PC-9 (cell line): ENCODE measurements at regions of chr15 and their contacts with region 1.

Region 1: DNA sequence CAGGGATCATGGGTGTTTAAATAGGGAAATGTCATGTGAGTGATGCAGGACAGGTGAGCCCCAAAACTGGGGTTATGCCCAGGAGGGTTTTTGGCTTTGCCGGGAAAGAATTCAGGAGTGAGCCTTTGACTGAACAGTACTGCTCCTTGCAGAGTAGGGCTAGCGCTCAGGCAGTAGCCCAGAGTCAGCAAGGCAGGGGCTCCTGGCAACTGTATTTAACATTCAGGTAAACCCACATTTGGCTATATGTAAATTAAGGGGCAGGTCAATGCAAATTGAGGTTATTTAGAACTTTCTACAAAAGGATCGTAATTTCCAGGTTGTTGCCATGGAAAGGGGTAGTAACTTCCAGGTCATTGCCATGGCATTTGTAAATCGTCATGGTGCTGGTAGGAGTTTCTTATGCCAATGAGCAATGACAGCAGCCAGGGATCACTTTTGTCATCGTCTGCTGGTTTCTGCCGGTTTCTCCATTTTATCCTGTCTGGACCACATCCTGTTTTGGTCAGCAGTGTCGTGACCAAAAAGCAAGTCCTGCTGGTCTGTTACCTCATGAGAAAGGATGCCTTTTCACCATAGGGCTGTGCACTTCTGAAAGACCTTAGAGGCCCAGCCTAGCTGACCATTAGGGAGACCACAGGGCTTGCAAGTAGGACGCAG is 24.3 kb downstream of the MTHFS start:
- DNase-seq: no peak
- H3K4me3 ChIP-seq: no peak overlapping the region
- H3K27ac ChIP-seq: no peak overlapping the region
- H3K4me1 ChIP-seq: no peaks in the 10 kb centered on the region
- H3K27me3 ChIP-seq: no peaks in the 10 kb centered on the region
- CTCF ChIP-seq: no peak

Region 2: GRCh38 chr15:78455749-78456148 is 1416.7 kb before region 1 on chr15:
- CTCF ChIA-PET with region 1: no interaction called
- POLR2A ChIA-PET with region 1: interaction called, 10 read pairs
- intact Hi-C with region 1: no loop called
- DNase-seq: no peak
- H3K4me3 ChIP-seq: no peak overlapping the region
- H3K27ac ChIP-seq: no peak overlapping the region
- H3K4me1 ChIP-seq: peaks cover 9% of the 10 kb centered on the region
- H3K27me3 ChIP-seq: no peaks in the 10 kb centered on the region
- CTCF ChIP-seq: no peak

Region 3: DNA sequence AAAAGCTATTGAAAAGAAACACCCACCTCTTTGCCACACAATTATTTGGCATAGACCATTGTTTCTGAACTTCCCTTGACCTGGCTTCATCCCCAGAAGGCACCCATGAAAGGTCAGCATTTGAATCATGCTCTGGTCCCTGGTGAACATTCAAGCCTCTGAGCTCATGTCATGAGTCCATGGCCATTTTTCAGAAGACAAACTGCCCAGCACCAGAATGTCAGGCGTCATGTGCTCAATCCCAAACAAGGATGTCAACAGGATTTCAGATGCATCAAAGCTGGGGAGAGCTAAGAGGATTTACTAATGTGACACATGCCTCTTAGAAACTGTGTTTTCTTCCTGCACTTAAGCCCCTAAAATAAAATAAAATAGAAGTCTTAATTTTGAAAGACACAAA is 520.3 kb before region 1 on chr15:
- CTCF ChIA-PET with region 1: no interaction called
- POLR2A ChIA-PET with region 1: interaction called, 11 read pairs
- intact Hi-C with region 1: no loop called
- DNase-seq: no peak
- H3K4me3 ChIP-seq: no peak overlapping the region
- H3K27ac ChIP-seq: no peak overlapping the region
- H3K4me1 ChIP-seq: no peaks in the 10 kb centered on the region
- H3K27me3 ChIP-seq: no peaks in the 10 kb centered on the region
- CTCF ChIP-seq: no peak